ENCODE measurements at regions of chr12 and their contacts with region 1.

Region 1: DNA sequence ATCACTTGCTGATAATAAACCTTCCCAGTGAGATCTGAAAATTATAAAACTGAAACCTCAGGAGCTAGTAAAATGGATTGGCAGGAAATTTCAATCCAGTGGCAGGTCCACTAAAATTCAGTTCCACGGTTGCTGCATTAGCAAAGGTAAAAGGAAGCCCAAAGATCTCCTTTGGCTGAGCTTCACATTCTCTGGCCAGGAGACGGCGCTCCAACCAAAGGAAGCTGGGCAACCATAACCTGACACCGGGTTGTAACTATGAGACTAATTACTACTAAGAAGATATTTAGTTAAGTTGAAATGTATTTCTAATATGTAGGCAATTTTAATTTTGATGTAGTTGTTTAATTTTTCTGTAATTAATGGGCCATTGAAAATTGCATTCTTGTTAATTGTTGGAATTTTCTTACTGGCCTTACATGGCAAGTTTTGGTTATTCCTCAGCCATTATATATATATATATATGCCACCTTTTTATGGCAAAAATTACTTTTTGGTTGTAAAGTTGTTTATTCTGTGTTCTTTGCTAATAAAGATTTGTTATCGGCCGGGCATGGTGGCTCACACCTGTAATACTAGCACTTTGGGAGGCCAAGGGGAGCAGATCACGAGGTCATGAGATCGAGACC is 17.0 kb downstream of the OR8S1 start:
- DNase-seq: peak; percentile 62
- ATAC-seq: peak; percentile 65 to 68
- H3K4me3 ChIP-seq: no peak overlapping the region
- H3K27ac ChIP-seq: no peak overlapping the region
- H3K4me1 ChIP-seq: no peaks in the 10 kb centered on the region
- H3K27me3 ChIP-seq: no peaks in the 10 kb centered on the region
- CTCF ChIP-seq: peak; percentile 63

Region 2: GRCh38 chr12:48618541-48618940 is 76.1 kb after region 1 on chr12:
- intact Hi-C with region 1: loop called (anchors 5 kb)
- DNase-seq: peak; percentile 54
- ATAC-seq: peak; percentile 83 to 86
- H3K4me3 ChIP-seq: no peak overlapping the region
- H3K27ac ChIP-seq: no peak overlapping the region
- H3K4me1 ChIP-seq: no peaks in the 10 kb centered on the region
- H3K27me3 ChIP-seq: peaks cover 6% of the 10 kb centered on the region
- CTCF ChIP-seq: peak; percentile 96

Region 3: DNA sequence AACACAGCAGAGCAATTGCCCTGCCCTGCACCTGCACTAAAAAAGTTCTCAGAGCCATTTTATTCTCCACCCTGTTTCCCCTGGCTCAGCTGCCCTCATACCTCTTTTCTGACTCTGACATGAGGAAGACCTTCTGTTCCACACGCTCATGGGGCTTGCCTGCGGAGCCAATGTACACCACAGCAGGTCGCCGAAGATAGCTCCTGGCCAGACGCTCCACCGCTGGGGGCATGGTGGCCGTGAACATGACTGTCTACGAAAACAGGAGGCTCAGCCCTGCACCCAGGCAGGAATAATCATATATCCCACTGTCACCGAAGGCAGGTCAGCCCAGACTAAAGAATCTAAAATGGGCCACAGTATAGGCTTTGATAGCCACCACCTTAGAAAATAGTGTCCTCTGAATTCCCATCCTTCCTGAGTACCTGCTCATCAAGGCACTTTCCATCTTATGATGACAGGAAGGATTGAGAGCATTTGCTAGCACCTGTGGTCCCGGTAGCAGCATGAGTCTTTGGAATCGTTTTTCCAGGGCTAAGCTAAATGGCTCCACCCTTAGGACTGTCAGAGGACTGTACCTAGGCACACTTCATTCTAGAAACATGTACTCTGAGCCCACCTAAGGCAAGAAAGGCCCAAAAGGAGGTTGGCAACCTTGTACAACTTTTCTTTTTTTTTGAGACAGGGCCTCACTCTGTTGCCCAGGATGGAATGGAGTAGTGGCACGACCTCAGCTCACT is 290.1 kb after region 1 on chr12:
- intact Hi-C with region 1: no loop called
- DNase-seq: no peak
- ATAC-seq: no peak
- H3K4me3 ChIP-seq: no peak overlapping the region
- H3K27ac ChIP-seq: no peak overlapping the region
- H3K4me1 ChIP-seq: no peaks in the 10 kb centered on the region
- H3K27me3 ChIP-seq: no peaks in the 10 kb centered on the region
- CTCF ChIP-seq: no peak

Measured in lower lobe of right lung (tissue), 2 donors.